Psoas muscle (tissue), 8 donors: ENCODE measurements at regions of chr3 and their contacts with region 1.

Region 1: DNA sequence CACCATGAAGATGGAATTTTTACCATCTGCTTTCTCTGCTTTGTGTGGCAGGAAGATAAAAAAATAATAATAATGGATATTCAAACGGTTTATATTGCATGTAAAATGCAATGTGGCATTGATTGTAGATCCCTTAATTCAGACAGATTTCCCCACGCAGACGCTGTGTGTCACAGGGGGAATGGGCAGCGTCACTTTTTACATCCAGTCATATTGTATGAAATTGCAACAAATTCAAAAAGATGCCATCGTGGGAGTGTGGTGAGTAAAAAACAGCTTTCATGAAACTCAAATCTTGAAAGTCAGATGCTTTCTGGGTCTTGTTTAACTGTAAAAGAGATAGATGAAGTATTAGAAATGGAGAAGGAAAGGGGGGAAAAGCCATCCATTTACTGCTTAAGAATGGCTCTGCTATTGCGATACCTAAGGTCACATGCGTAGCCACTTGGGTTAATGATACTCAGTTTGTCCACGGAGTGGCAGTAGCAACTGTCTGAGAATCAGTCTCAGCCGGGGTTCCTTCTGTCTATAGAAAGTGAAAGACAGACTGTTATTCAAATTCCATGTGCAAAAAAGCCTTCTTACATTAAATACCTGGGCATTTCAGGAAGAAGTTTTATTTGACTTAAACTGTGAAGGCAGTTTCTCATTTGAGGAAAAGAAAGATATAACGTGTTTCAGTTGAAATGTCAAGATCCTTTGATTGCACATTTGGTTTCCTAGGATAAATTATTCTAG is 28.5 kb downstream of the BTD start:
- DNase-seq: no peak
- ATAC-seq: peak; percentile 80 to 90 (median 88)
- H3K4me3 ChIP-seq: peak overlapping the region; percentile 51
- H3K27ac ChIP-seq: peak overlapping the region; percentile 95
- H3K4me1 ChIP-seq: peaks cover 31% of the 10 kb centered on the region
- H3K27me3 ChIP-seq: no peaks in the 10 kb centered on the region
- CTCF ChIP-seq: peak; percentile 77

Region 2: GRCh38 chr3:15585111-15585845 is 44.8 kb before region 1 on chr3:
- intact Hi-C with region 1: no loop called
- DNase-seq: no peak
- ATAC-seq: no peak
- H3K4me3 ChIP-seq: no peak overlapping the region
- H3K27ac ChIP-seq: no peak overlapping the region
- H3K4me1 ChIP-seq: no peaks in the 10 kb centered on the region
- H3K27me3 ChIP-seq: no peaks in the 10 kb centered on the region
- CTCF ChIP-seq: no peak

Region 3: GRCh38 chr3:15673536-15673935 is 43.5 kb after region 1 on chr3:
- intact Hi-C with region 1: loop called in 1 of 2 experiments (anchors 5 kb)
- DNase-seq: no peak
- ATAC-seq: peak; percentile 69 to 89 (median 78)
- H3K4me3 ChIP-seq: no peak overlapping the region
- H3K27ac ChIP-seq: peak overlapping the region; percentile 74
- H3K4me1 ChIP-seq: peaks cover 10% of the 10 kb centered on the region
- H3K27me3 ChIP-seq: no peaks in the 10 kb centered on the region
- CTCF ChIP-seq: no peak

Region 4: DNA sequence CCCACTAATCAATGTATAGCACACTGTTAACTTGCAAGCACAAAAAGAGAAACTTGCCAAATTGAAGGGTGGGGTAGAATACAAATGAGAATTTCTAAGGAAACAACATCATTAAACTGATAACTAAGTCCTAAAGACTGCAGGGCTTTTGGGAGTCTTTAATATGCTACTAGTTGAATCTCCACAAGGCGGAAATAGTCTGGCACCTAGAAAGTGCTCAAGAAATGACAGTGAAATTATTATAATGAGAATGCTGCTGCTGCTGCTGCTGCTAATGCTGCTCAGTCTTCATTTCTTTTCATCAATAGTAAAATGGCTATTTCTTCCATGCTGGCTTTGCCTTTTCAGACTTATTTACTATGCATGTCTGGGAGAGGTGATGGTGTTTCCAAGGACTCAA is 63.3 kb after region 1 on chr3:
- intact Hi-C with region 1: loop called in 1 of 2 experiments (anchors 1 kb)
- DNase-seq: no peak
- ATAC-seq: no peak
- H3K4me3 ChIP-seq: no peak overlapping the region
- H3K27ac ChIP-seq: no peak overlapping the region
- H3K4me1 ChIP-seq: peaks cover 5% of the 10 kb centered on the region
- H3K27me3 ChIP-seq: no peaks in the 10 kb centered on the region
- CTCF ChIP-seq: no peak

Region 5: GRCh38 chr3:15815696-15816095 is 185.7 kb after region 1 on chr3:
- intact Hi-C with region 1: loop called (anchors 2 to 5 kb)
- DNase-seq: no peak
- ATAC-seq: peak in 3 of 4 donors; percentile 70 to 86 (median 80)
- H3K4me3 ChIP-seq: no peak overlapping the region
- H3K27ac ChIP-seq: peak overlapping the region; percentile 36
- H3K4me1 ChIP-seq: peaks cover 21% of the 10 kb centered on the region
- H3K27me3 ChIP-seq: no peaks in the 10 kb centered on the region
- CTCF ChIP-seq: peak; percentile 52